Activated B cell treated with CpG ODN at 0.5 μM for 24 hours (primary cell): ENCODE measurements at regions of chrX and their contacts with region 1.

Region 1: DNA sequence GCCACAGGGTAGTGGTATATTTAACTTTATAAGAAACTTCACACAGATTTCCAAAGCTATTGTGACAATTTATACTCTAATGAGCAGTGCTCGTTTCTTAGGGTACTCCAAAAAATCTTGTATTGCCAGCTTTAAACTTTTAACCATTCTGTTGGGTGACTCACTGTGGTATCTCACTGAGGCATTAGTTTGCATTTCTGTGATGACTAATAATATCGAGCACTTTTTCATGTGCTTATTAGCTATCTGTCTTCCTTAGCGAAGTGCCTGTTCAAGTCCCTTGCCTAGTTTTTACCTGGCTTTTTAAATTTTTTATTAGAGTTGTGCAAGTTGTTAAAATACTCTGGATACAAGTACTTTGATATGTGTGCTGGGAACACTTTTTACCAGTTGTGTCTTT is 5.5 kb downstream of the PNMA3 start:
- DNase-seq: no peak
- ATAC-seq: no peak
- H3K4me3 Mint-ChIP-seq: no peak overlapping the region
- H3K27ac Mint-ChIP-seq: no peak overlapping the region
- H3K4me1 Mint-ChIP-seq: peaks cover 4% of the 10 kb centered on the region
- H3K27me3 Mint-ChIP-seq: peaks cover 6% of the 10 kb centered on the region
- CTCF ChIP-seq: no peak

Region 2: GRCh38 chrX:152941328-152942106 is 120.2 kb before region 1 on chrX:
- CTCF ChIA-PET with region 1: no interaction called
- POLR2A ChIA-PET with region 1: no interaction called
- intact Hi-C with region 1: no loop called
- DNase-seq: peak; percentile 84
- ATAC-seq: peak; percentile 96
- H3K4me3 Mint-ChIP-seq: peak overlapping the region; percentile 87
- H3K27ac Mint-ChIP-seq: peak overlapping the region; percentile 83
- H3K4me1 Mint-ChIP-seq: peaks cover 9% of the 10 kb centered on the region
- H3K27me3 Mint-ChIP-seq: no peaks in the 10 kb centered on the region
- CTCF ChIP-seq: no peak

Region 3: GRCh38 chrX:153319295-153320046 is 257.7 kb after region 1 on chrX:
- CTCF ChIA-PET with region 1: no interaction called
- POLR2A ChIA-PET with region 1: no interaction called
- intact Hi-C with region 1: loop called (anchors 5 kb)
- DNase-seq: no peak
- ATAC-seq: no peak
- H3K4me3 Mint-ChIP-seq: no peak overlapping the region
- H3K27ac Mint-ChIP-seq: no peak overlapping the region
- H3K4me1 Mint-ChIP-seq: no peaks in the 10 kb centered on the region
- H3K27me3 Mint-ChIP-seq: peaks cover 11% of the 10 kb centered on the region
- CTCF ChIP-seq: no peak